ENCODE measurements at regions of chr1 and their contacts with region 1.

Region 1: DNA sequence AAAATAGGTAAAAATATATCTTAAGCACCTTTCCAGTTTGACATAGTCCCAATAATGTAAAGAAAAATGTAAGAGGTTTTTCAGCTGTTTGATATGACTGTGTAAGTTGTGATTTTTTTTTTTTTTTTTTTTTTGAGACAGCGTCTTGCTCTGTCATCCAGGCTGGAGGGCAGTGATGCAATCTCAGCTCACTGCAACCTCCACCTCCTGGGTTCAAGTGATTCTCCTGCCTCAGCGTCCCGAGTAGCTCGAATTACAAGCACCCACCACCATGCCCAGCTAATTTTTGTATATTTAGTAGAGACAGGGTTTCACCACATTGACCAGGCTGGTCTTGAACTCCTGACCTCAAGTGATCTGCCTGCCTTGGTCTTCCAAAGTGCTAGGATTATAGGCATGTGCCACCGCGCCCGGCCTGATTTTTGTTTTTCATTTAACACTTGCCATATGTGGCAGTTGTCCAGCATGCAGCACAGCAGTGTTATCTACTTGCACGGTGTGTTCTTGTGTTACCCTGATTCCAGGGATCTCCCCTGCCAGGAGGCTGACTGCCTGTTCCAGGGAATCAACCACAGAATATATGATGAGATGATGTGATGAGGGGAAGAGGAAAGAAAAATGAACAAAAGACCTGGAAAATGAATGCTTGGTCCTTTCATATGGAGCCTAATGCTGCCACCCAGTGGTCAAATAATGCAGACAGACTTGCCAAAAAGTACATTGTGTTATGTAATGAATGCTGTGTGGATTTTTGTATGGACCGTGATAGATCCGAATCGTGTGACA is 79.0 kb downstream of the RAVER2 start:
- DNase-seq: peak; percentile 56 to 60
- H3K4me3 ChIP-seq: no peak overlapping the region
- H3K4me3 Mint-ChIP-seq: no peak overlapping the region
- H3K27ac Mint-ChIP-seq: no peak overlapping the region
- H3K4me1 ChIP-seq: no peaks in the 10 kb centered on the region
- H3K4me1 Mint-ChIP-seq: peaks cover 12% of the 10 kb centered on the region
- H3K27me3 ChIP-seq: no peaks in the 10 kb centered on the region
- H3K27me3 Mint-ChIP-seq: no peaks in the 10 kb centered on the region
- CTCF ChIP-seq: peak; percentile 41 to 60

Region 2: GRCh38 chr1:64686828-64687724 is 136.8 kb before region 1 on chr1:
- CTCF ChIA-PET with region 1: no interaction called
- POLR2A ChIA-PET with region 1: no interaction called
- intact Hi-C with region 1: loop called (anchors 1 kb)
- DNase-seq: peak in 1 of 2 experiments; percentile 29
- H3K4me3 ChIP-seq: no peak overlapping the region
- H3K4me3 Mint-ChIP-seq: no peak overlapping the region
- H3K27ac Mint-ChIP-seq: no peak overlapping the region
- H3K4me1 ChIP-seq: no peaks in the 10 kb centered on the region
- H3K4me1 Mint-ChIP-seq: no peaks in the 10 kb centered on the region
- H3K27me3 ChIP-seq: no peaks in the 10 kb centered on the region
- H3K27me3 Mint-ChIP-seq: no peaks in the 10 kb centered on the region
- CTCF ChIP-seq: peak; percentile 58 to 66

Region 3: DNA sequence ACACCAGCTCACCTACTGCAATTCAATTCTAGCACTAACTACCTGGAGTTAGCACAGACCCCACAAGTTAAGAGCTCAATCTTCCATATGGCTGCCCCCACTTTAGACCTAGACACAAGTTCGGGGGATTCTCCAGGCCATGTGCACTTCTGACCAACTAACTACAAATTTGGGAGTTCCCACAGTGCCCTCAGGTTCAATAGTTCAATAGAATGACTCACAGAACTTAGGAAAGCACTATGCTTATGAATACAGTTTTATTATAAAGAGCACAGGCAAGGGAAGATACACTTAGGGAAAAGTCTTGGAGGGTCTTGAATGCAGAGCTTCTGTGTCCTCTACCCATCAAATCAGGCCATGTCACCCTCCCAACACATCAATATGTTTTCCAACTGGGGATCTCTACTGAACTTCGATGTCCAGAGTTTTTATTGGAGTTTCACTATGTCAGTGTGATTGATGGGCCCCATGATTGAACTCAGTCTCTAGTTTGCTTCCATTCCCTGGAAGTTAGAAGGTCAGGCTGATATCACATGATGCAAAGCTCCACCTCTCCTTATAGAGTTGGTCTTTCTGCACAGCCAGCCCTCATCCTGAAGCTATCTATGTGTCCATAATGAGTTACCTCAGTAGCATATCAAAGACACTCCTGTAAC is 32.9 kb before region 1 on chr1:
- CTCF ChIA-PET with region 1: no interaction called
- POLR2A ChIA-PET with region 1: no interaction called
- intact Hi-C with region 1: no loop called
- DNase-seq: no peak
- H3K4me3 ChIP-seq: no peak overlapping the region
- H3K4me3 Mint-ChIP-seq: no peak overlapping the region
- H3K27ac Mint-ChIP-seq: no peak overlapping the region
- H3K4me1 ChIP-seq: no peaks in the 10 kb centered on the region
- H3K4me1 Mint-ChIP-seq: no peaks in the 10 kb centered on the region
- H3K27me3 ChIP-seq: no peaks in the 10 kb centered on the region
- H3K27me3 Mint-ChIP-seq: no peaks in the 10 kb centered on the region
- CTCF ChIP-seq: no peak

Region 4: GRCh38 chr1:64841330-64842065 is 17.6 kb after region 1 on chr1:
- CTCF ChIA-PET with region 1: no interaction called
- POLR2A ChIA-PET with region 1: no interaction called
- intact Hi-C with region 1: no loop called
- DNase-seq: no peak
- H3K4me3 ChIP-seq: no peak overlapping the region
- H3K4me3 Mint-ChIP-seq: no peak overlapping the region
- H3K27ac Mint-ChIP-seq: no peak overlapping the region
- H3K4me1 ChIP-seq: no peaks in the 10 kb centered on the region
- H3K4me1 Mint-ChIP-seq: no peaks in the 10 kb centered on the region
- H3K27me3 ChIP-seq: no peaks in the 10 kb centered on the region
- H3K27me3 Mint-ChIP-seq: no peaks in the 10 kb centered on the region
- CTCF ChIP-seq: no peak